Heart left ventricle (tissue), 16 donors: ENCODE measurements at regions of chr4 and their contacts with region 1.

Region 1: GRCh38 chr4:152247271-152247975 is 288.5 kb downstream of the FBXW7 start:
- DNase-seq: peak; percentile 33 to 73 (median 65)
- ATAC-seq: peak; percentile 44 to 72 (median 66)
- H3K4me3 ChIP-seq: no peak overlapping the region
- H3K27ac ChIP-seq: peak overlapping the region in 1 of 12 donors; percentile 10
- H3K4me1 ChIP-seq: peaks cover 0 to 20% (median 13%) of the 10 kb centered on the region in 12 donors
- H3K27me3 ChIP-seq: no peaks in the 10 kb centered on the region
- CTCF ChIP-seq: no peak
- POLR2A ChIP-seq: no peak

Region 2: DNA sequence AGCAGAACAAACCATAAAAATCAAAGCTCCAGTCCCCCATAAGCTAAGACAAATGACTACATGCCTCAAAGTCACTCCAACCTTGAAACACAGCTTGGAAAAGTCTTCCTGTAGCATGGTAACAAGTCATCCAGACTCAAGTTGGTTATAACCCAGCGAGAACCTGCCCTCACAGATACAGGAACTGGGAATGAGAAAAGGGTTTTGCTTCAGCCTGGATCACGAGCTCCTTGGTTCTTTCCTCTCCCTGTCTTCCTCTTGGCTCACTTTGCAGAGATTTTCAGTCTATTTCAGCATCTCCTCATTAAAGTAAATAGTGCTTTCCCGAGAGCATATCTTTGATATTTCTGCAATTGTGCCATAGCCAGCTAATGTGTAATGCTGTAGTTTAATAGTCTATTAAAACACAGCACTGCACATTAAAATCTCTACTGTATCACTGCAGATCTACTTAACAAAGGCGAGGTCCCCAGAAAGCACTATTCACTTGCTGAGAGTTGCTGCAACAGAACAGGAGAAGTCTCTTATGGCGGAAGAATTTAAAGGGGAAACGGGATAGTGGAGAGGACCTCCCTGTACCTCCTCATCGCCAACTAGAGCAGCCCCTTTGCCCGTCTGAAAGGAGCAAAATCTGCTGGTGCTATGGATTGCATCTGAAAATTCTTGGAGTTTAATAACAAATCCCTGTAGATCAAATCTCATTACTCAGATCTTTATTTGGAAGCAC is 237.3 kb before region 1 on chr4:
- intact Hi-C with region 1: no loop called
- DNase-seq: no peak
- ATAC-seq: no peak
- H3K4me3 ChIP-seq: no peak overlapping the region
- H3K27ac ChIP-seq: no peak overlapping the region
- H3K4me1 ChIP-seq: peaks cover 0 to 15% (median 3%) of the 10 kb centered on the region in 12 donors
- H3K27me3 ChIP-seq: no peaks in the 10 kb centered on the region
- CTCF ChIP-seq: no peak
- POLR2A ChIP-seq: no peak

Region 3: GRCh38 chr4:152148057-152148456 is 99.4 kb before region 1 on chr4:
- intact Hi-C with region 1: no loop called
- DNase-seq: no peak
- ATAC-seq: no peak
- H3K4me3 ChIP-seq: no peak overlapping the region
- H3K27ac ChIP-seq: no peak overlapping the region
- H3K4me1 ChIP-seq: no peaks in the 10 kb centered on the region
- H3K27me3 ChIP-seq: no peaks in the 10 kb centered on the region
- CTCF ChIP-seq: no peak
- POLR2A ChIP-seq: no peak

Region 4: DNA sequence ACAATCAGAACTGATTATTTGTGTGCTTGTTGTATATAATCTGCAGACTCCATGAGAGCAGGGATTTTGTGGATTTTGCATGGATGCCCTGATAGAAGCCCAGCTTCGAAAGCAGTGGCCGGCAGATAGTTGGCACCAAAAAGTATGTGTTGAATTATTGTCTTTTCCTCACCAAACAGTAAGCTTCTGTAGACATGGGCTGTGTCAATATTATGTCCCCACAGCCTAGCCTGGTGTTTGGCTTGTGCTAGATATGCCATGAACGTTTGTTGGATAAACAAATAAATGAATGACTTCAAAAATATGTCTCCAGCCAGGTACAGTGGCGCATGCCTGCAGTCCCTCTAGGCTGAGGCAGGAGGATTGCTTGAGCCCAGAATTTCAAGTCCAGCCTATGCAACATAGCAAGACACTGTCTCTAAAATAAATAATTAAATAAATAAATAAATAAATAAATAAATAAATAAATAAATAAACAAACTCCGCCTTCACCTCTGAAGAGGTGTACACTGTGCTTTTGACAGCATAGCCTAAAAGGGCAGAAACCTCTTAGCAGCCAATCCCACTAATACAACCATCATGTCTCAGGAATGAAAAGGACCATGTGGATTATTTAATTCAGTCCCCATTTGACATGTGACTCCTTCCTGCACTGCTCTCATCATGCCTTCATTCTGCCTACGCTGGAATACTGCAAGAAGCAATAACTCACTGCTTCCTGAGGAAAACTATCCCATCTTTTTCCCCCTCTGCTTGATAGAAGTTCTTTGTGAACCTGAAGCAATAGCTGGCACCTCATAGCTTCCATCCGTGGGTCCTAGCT is 46.7 kb before region 1 on chr4:
- intact Hi-C with region 1: loop called in 1 of 10 experiments (anchors 5 kb)
- DNase-seq: no peak
- ATAC-seq: no peak
- H3K4me3 ChIP-seq: no peak overlapping the region
- H3K27ac ChIP-seq: no peak overlapping the region
- H3K4me1 ChIP-seq: peaks cover 0 to 27% (median 13%) of the 10 kb centered on the region in 12 donors
- H3K27me3 ChIP-seq: no peaks in the 10 kb centered on the region
- CTCF ChIP-seq: no peak
- POLR2A ChIP-seq: no peak